ENCODE measurements at regions of chr15 and their contacts with region 1.

Region 1: GRCh38 chr15:41465822-41466421 is 27.8 kb upstream of the ITPKA start:
- DNase-seq: peak; percentile 56
- CTCF ChIP-seq: peak; percentile 78

Region 2: GRCh38 chr15:41523097-41523496 is 57.2 kb after region 1 on chr15:
- in situ Hi-C with region 1: loop called (anchors 10 kb)
- DNase-seq: no peak
- CTCF ChIP-seq: no peak

Measured in GM13976 (cell line).